ENCODE measurements at regions of chr6 and their contacts with region 1.

Region 1: DNA sequence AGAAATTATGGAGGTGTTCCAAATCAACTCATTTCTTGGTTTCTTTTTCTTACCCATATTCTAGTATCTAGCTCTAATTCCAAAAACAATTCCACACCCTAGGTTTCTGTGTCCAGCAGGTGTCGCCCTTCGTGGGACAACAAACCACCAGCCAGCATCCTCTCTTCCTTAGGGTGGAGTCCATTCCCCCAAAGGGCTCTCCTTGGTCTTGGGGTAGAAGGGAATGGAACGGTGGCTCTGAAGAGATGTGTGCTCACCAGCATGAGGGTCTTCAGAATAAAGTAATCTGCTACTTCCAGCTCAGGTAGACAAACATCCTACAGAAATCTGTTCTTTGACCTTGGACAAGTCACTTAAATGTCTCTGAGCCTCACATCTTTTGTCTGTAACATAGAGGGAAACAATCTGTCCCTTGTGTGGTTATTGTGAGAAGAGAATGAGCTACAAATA is 7.2 kb downstream of the HLA-DMB start:
- DNase-seq: peak; percentile 33 to 70
- ATAC-seq: peak; percentile 54 to 77
- H3K4me3 ChIP-seq: no peak overlapping the region
- H3K27ac ChIP-seq: no peak overlapping the region
- H3K4me1 ChIP-seq: no peaks in the 10 kb centered on the region
- H3K27me3 ChIP-seq: no peaks in the 10 kb centered on the region
- CTCF ChIP-seq: peak; percentile 74 to 88 (median 86)
- POLR2A ChIP-seq: no peak

Region 2: DNA sequence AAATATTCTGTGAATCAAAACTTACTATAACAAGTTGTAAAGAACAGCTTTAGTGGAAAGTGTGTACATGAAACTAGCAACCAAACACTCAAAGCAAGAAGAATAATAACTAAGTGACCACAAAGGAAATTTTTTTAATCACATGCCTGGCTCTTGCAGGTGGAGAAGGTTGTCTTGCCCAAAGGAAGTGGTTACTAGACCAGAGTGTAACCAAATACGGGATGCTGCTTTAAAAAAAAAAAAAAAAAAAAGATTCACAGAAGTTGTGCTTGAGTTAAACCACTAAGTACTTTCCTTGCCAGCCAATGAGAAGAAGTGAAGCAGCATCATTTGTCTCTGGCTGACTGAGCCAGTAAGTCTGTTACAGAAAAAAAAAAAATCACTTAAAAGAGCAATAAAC is 248.1 kb before region 1 on chr6:
- in situ Hi-C with region 1: no loop called
- intact Hi-C with region 1: no loop called
- DNase-seq: no peak
- ATAC-seq: no peak
- H3K4me3 ChIP-seq: no peak overlapping the region
- H3K27ac ChIP-seq: no peak overlapping the region
- H3K4me1 ChIP-seq: no peaks in the 10 kb centered on the region
- H3K27me3 ChIP-seq: no peaks in the 10 kb centered on the region
- CTCF ChIP-seq: no peak
- POLR2A ChIP-seq: no peak

Region 3: GRCh38 chr6:32885698-32886286 is 47.9 kb before region 1 on chr6:
- in situ Hi-C with region 1: loop called in 2 of 4 experiments (anchors 10 kb)
- intact Hi-C with region 1: loop called (anchors 5 kb)
- DNase-seq: no peak
- ATAC-seq: peak; percentile 43 to 51
- H3K4me3 ChIP-seq: no peak overlapping the region
- H3K27ac ChIP-seq: no peak overlapping the region
- H3K4me1 ChIP-seq: peaks cover 5 to 9% of the 10 kb centered on the region in 2 donors
- H3K27me3 ChIP-seq: no peaks in the 10 kb centered on the region
- CTCF ChIP-seq: peak; percentile 49 to 76 (median 65)
- POLR2A ChIP-seq: no peak

Region 4: DNA sequence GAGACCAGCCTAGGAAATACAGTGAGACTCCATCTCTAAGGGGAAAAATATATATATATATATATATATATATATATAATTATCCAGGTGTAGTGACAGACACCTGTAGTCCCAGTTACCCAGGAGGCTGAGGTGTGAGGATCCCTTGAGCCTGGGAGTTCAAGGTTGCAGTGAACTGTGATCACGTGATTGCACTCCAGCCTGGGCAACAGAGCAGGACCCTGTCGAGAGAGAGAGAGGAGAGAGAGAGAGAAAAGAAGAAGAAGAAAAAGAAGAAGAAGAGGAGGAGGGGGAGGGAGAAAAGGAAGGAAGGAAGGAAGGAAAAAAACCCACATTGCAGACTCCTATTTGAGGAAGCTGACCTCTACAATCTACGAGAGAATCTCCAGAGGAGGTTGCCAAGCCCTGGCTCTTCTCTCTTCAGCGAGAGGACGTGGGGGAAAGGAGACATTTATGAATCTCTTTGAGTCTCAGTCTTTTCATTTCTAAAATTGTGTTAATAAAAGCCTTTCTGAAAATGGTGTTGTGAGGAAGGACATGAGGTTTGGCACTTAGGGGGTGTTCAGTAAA is 208.9 kb after region 1 on chr6:
- in situ Hi-C with region 1: no loop called
- intact Hi-C with region 1: no loop called
- DNase-seq: no peak
- ATAC-seq: no peak
- H3K4me3 ChIP-seq: no peak overlapping the region
- H3K27ac ChIP-seq: no peak overlapping the region
- H3K4me1 ChIP-seq: no peaks in the 10 kb centered on the region
- H3K27me3 ChIP-seq: peaks cover 0 to 5% (median 3%) of the 10 kb centered on the region in 3 donors
- CTCF ChIP-seq: no peak
- POLR2A ChIP-seq: no peak

Measured in gastrocnemius medialis (tissue), 4 donors.